ENCODE measurements at regions of chr15 and their contacts with region 1.

Region 1: GRCh38 chr15:81265944-81266775 is 57.8 kb downstream of the STARD5 start:
- DNase-seq: peak; percentile 88
- H3K4me3 ChIP-seq: no peak overlapping the region
- H3K27ac ChIP-seq: no peak overlapping the region
- H3K4me1 ChIP-seq: peaks cover 5% of the 10 kb centered on the region
- H3K27me3 ChIP-seq: no peaks in the 10 kb centered on the region
- CTCF ChIP-seq: peak; percentile 88

Region 2: GRCh38 chr15:80989518-80990478 is 276.4 kb before region 1 on chr15 and contains the start of gene MESD:
- intact Hi-C with region 1: loop called (anchors 5 kb)
- DNase-seq: peak; percentile 100
- H3K4me3 ChIP-seq: peak within 1 kb of the TSS; percentile 96
- H3K27ac ChIP-seq: peak within 1 kb of the TSS; percentile 94
- H3K4me1 ChIP-seq: peaks cover 14% of the 10 kb centered on the region
- H3K27me3 ChIP-seq: no peaks in the 10 kb centered on the region
- CTCF ChIP-seq: no peak
- total RNA-seq, gene MESD: 20.4 to 26.1 TPM

Region 3: DNA sequence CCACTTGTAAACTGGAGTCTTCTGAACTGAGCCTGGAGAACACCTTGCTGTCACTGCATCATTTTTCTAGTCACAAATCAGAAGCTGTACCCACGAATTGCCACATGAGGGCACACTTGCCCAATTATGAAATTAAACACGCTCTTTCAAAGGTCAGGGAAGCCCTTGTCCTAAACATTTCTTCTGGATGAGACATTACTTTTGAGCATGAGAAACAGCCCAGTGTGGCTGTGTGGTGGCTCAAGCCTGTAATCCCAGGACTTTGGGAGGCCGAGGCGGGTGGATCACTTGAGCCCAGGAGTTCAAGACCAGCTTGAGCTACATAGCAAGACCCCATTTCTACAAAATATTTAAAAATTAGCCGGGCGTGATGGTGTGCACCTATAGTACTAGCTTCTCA is 159.6 kb before region 1 on chr15:
- intact Hi-C with region 1: loop called (anchors 2 kb)
- DNase-seq: peak; percentile 45
- H3K4me3 ChIP-seq: no peak overlapping the region
- H3K27ac ChIP-seq: no peak overlapping the region
- H3K4me1 ChIP-seq: no peaks in the 10 kb centered on the region
- H3K27me3 ChIP-seq: no peaks in the 10 kb centered on the region
- CTCF ChIP-seq: peak; percentile 70

Region 4: GRCh38 chr15:81155375-81156218 is 110.6 kb before region 1 on chr15:
- intact Hi-C with region 1: loop called (anchors 2 kb)
- DNase-seq: no peak
- H3K4me3 ChIP-seq: no peak overlapping the region
- H3K27ac ChIP-seq: no peak overlapping the region
- H3K4me1 ChIP-seq: no peaks in the 10 kb centered on the region
- H3K27me3 ChIP-seq: no peaks in the 10 kb centered on the region
- CTCF ChIP-seq: peak; percentile 30

Region 5: DNA sequence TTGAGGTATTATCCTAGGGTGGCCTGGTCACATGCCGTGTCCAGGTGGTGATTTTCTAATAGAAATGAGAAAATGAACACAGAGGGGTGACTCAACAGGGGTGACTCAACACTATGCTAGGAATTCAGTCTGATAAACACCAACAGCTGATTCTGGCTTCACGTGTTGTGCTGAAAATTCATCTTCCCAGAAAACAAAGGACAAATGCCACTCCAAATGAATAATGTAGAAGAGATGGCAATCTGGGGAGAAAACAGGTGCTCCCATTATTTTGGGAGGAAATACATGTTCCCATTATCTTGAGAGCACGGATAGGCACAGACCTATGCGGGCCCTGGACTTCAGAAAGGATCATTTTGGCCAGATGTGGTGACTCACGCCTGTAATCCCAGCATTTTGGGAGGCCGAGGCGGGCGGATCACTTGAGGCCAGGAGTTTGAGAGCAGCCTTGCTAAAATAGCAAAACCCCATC is 880.9 kb after region 1 on chr15:
- intact Hi-C with region 1: no loop called
- DNase-seq: no peak
- H3K4me3 ChIP-seq: no peak overlapping the region
- H3K27ac ChIP-seq: no peak overlapping the region
- H3K4me1 ChIP-seq: no peaks in the 10 kb centered on the region
- H3K27me3 ChIP-seq: no peaks in the 10 kb centered on the region
- CTCF ChIP-seq: no peak